ENCODE measurements at regions of chr16 and their contacts with region 1.

Region 1: DNA sequence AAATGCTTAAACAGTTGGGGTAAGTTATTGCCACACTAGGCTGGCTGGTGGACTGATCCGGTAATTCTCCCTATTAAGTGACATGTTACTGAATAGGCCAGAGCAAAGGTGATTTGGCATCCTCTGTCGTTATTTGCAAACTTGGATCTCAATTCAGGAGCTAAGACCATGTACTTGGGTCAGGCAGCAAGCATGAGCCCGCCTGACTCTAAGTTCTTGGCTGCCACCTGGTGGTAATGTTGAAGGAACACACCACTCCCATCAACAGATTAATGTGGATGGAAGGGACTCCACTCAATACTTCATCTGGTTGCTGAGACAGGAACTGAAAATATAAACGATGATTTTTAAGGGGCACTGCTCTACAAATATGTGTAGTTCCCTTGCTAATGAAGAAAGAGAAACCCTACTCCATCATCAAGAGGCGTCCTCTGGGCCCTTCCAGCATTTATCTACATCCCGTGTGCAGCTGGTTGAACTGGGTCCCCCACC is 70.8 kb downstream of the EMP2 start:
- DNase-seq: peak; percentile 77 to 91 (median 81)
- ATAC-seq: peak; percentile 100
- H3K4me3 ChIP-seq: no peak overlapping the region
- H3K27ac ChIP-seq: no peak overlapping the region
- H3K4me1 ChIP-seq: peaks cover 0 to 4% of the 10 kb centered on the region in 2 experiments; a peak in 1 of 5 replicates
- H3K27me3 ChIP-seq: no peaks in the 10 kb centered on the region; a peak in 1 of 5 replicates
- CTCF ChIP-seq: peak; percentile 86 to 95 (median 88)
- EP300 ChIP-seq: no peak
- POLR2A ChIP-seq: no peak
- RAD21 ChIP-seq: peak; percentile 95 to 99

Region 2: DNA sequence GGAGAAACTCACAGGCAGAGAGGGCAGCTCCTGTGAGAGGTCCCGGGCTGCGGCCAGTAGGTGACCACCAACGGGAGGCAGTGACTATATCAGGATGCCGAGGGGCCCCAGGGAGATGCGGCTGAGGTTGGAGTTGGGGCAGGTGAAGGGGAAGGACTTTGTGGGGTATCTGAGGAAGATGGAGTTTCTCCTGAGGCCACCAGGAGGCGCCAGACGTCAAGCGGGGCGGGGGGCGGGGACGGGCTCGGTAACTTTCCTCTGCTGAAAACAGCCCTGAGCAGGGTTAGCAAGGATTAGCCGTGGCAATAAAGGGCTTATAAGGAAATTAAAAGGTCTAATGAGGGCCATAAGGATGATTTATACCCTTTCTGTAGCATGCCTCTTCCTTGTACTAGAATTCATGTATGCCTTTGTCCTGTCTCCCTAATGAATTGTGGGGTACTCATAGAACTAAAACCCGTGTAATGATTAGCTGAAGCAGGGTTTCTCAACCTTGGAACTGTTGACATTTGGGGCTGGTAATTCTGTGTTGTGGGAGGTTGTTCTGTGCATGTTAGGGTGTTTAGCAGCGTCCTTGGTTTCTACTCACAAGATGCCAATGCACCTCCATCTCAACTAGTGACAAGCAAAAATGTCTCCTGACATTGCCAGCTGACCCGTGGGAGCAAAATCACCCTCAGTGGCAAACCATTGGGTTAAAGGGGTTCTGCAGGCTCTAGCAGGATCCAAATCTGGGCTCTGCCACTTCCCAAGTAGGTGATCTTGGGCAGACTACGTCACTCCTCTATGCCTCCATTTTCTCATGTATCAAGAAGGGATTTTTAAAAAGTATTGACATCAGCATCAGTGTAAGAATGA is 252.6 kb before region 1 on chr16:
- CTCF ChIA-PET with region 1: interaction called, 29 read pairs
- POLR2A ChIA-PET with region 1: interaction called, 4 read pairs
- in situ Hi-C with region 1: loop called (anchors 5 kb)
- intact Hi-C with region 1: loop called (anchors 1 kb)
- DNase-seq: peak; percentile 66 to 88 (median 86)
- ATAC-seq: peak; percentile 87
- H3K4me3 ChIP-seq: no peak overlapping the region
- H3K27ac ChIP-seq: no peak overlapping the region
- H3K4me1 ChIP-seq: peaks cover 0 to 6% of the 10 kb centered on the region in 2 experiments; a peak in 3 of 5 replicates
- H3K27me3 ChIP-seq: peaks cover 9 to 12% of the 10 kb centered on the region in 2 experiments; a peak in 4 of 5 replicates
- CTCF ChIP-seq: peak; percentile 73 to 83 (median 82)
- EP300 ChIP-seq: no peak
- POLR2A ChIP-seq: no peak
- RAD21 ChIP-seq: peak; percentile 67 to 82

Region 3: GRCh38 chr16:10314811-10315210 is 194.8 kb before region 1 on chr16:
- CTCF ChIA-PET with region 1: interaction called, 16 read pairs
- POLR2A ChIA-PET with region 1: interaction called, 3 read pairs
- in situ Hi-C with region 1: loop called (anchors 5 kb)
- intact Hi-C with region 1: loop called (anchors 1 kb)
- DNase-seq: peak in 1 of 4 experiments; percentile 42
- ATAC-seq: peak; percentile 79
- H3K4me3 ChIP-seq: no peak overlapping the region
- H3K27ac ChIP-seq: no peak overlapping the region
- H3K4me1 ChIP-seq: peaks cover 10 to 24% of the 10 kb centered on the region in 2 experiments
- H3K27me3 ChIP-seq: no peaks in the 10 kb centered on the region
- CTCF ChIP-seq: peak in 2 of 3 experiments; percentile 24 to 63; a peak in 3 of 6 replicates
- EP300 ChIP-seq: no peak
- POLR2A ChIP-seq: no peak
- RAD21 ChIP-seq: peak; percentile 67 to 91; a peak in 3 of 4 replicates

Region 4: DNA sequence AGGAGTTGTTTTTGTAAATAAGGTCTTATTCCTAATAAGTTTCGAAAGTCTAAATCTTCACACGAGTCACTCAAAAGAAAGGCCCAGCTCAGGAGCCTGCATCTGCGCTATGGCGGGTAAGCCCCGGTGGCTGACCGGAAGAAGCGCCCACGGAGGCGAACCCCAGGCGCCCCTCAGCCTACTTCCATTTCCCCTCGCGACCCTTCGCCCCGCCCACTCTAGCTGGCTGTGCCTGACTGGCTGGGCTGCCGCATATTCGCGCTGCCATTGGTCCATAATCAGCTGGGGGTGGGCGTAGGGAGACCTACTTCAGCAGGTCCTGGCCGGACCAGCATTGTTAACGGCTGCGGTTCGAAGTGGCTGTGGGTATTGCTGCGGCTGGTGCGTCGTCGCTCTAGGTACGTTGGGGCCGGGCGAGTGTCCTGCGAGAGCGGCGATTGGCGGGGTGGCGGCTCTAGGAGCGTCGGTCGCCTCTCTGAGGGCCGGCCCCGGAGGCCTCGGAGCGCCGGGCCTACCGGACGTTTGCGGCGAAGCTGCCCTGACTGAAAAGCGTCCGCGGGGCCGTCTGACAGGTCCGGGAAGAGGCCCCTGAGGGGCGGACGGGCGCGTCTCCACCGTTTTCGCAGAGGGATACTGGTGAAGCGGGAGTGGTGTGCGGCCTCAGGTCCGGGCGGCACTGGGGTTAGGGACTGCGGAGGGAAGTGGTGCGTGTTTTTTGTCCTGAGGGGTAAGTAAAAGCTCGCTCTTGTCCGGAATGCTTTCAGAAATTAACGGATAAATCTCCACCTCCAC is 123.7 kb before region 1 on chr16 and contains the start of gene ATF7IP2:
- CTCF ChIA-PET with region 1: no interaction called
- POLR2A ChIA-PET with region 1: no interaction called
- in situ Hi-C with region 1: no loop called
- intact Hi-C with region 1: loop called (anchors 5 kb)
- DNase-seq: peak; percentile 96 to 97 (median 96)
- ATAC-seq: peak; percentile 91
- H3K4me3 ChIP-seq: peak within 1 kb of the TSS; percentile 76
- H3K27ac ChIP-seq: peak within 1 kb of the TSS; percentile 92
- H3K4me1 ChIP-seq: peaks cover 18 to 31% of the 10 kb centered on the region in 2 experiments; a peak in 4 of 5 replicates
- H3K27me3 ChIP-seq: no peaks in the 10 kb centered on the region
- CTCF ChIP-seq: no peak
- EP300 ChIP-seq: peak; percentile 29; the same call in 1 of the 2 replicates
- POLR2A ChIP-seq: peak; percentile 99
- RAD21 ChIP-seq: peak in 1 of 2 experiments; percentile 16; a peak in 1 of 4 replicates
- polyA plus RNA-seq, gene ATF7IP2: 352 to 511 TPM

Region 5: GRCh38 chr16:10419712-10420111 is 89.9 kb before region 1 on chr16:
- CTCF ChIA-PET with region 1: no interaction called
- POLR2A ChIA-PET with region 1: no interaction called
- in situ Hi-C with region 1: no loop called
- intact Hi-C with region 1: no loop called
- DNase-seq: no peak
- ATAC-seq: no peak
- H3K4me3 ChIP-seq: no peak overlapping the region
- H3K27ac ChIP-seq: no peak overlapping the region
- H3K4me1 ChIP-seq: no peaks in the 10 kb centered on the region
- H3K27me3 ChIP-seq: no peaks in the 10 kb centered on the region
- CTCF ChIP-seq: no peak
- EP300 ChIP-seq: no peak
- POLR2A ChIP-seq: no peak
- RAD21 ChIP-seq: no peak

Region 6: DNA sequence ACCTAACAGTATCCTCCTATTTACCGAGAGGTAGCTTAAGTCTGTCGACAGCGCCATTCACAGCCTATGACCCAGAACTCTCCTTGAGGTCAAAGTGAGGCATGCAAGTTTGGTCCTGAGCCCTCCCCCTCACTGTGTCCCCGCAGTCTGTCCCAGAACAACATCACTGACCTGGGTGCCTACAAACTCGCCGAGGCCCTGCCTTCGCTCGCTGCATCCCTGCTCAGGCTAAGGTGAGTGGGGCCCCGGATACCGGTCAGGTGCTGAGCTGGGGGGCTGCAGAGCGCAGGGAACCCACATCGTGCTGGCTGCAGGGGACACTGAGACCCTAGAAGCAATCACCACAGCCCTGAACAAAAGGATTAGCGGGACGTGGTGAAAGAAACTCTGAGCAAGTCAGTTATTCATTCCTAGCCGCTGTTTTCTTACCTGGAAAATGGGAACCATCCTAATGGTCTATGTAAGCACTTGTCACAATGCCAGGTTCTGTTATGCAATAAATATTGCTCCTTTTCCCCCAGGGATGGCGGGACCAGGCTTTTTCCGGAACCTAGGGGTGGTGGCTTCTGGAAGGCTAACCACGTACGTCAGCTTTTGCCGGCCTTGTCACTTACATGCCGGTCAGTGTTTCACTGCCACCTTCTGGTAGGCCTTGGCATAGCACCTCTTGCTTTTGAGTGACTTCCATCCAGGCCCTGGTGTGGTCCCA is 408.9 kb after region 1 on chr16:
- CTCF ChIA-PET with region 1: interaction called, 19 read pairs
- POLR2A ChIA-PET with region 1: no interaction called
- in situ Hi-C with region 1: no loop called
- intact Hi-C with region 1: loop called (anchors 1 kb)
- DNase-seq: peak; percentile 80 to 93 (median 82)
- ATAC-seq: peak; percentile 97
- H3K4me3 ChIP-seq: no peak overlapping the region
- H3K27ac ChIP-seq: no peak overlapping the region
- H3K4me1 ChIP-seq: peaks cover 3 to 10% of the 10 kb centered on the region in 2 experiments; a peak in 2 of 5 replicates
- H3K27me3 ChIP-seq: peaks cover 6 to 17% of the 10 kb centered on the region in 2 experiments; a peak in 4 of 5 replicates
- CTCF ChIP-seq: peak; percentile 89 to 98 (median 95)
- EP300 ChIP-seq: no peak
- POLR2A ChIP-seq: no peak
- RAD21 ChIP-seq: peak; percentile 75 to 92